ENCODE measurements at regions of chr1 and their contacts with region 1.

Region 1: GRCh38 chr1:212012034-212012740 is 23.2 kb downstream of the INTS7 start:
- DNase-seq: peak; percentile 72
- H3K4me3 Mint-ChIP-seq: no peak overlapping the region
- H3K27ac Mint-ChIP-seq: no peak overlapping the region
- H3K4me1 Mint-ChIP-seq: no peaks in the 10 kb centered on the region
- H3K27me3 Mint-ChIP-seq: no peaks in the 10 kb centered on the region

Region 2: DNA sequence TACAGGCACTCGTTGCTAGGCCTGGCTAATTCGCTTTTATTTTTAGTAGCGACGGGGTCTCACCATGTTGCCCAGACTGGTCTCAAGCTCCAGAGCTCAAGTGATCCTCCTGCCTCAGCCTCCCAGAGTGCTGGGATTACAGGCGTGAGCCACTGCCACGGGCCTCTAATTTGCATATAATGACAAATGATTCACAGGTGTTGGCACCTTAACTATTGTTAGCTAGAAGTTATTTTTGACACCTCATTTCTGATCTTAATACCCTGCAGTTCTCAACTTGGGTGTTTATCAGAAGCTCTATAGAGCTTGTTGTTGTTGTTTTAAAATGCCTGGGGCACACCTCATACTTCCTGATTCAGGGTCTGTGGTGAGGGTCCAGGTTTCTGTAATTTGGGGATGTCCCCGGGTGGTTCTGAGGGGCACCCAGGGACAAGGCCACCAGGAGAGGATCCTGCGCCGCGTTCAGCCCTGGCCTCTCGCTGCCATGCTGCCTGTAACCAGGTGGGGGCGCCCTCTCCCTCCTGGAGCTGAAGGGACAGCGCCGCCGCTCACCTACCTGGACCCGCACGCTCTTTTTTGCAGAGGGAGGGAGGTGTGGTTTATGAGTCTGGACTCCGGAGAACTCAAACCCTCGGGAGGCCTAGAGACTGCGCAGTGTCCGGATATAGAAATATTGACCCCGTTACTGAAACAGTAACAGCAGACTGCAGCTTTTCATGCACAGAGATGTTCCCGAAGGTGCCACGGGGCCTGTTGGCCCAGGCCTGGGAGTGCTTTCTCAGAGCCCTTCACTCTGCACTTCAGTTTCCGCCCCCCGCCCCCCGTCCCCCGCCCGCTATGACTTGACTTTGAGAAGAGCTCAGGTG is 313.8 kb before region 1 on chr1:
- CTCF ChIA-PET with region 1: interaction called, 10 read pairs
- POLR2A ChIA-PET with region 1: no interaction called
- DNase-seq: peak; percentile 85
- H3K4me3 Mint-ChIP-seq: peak overlapping the region; percentile 52
- H3K27ac Mint-ChIP-seq: no peak overlapping the region
- H3K4me1 Mint-ChIP-seq: peaks cover 46% of the 10 kb centered on the region
- H3K27me3 Mint-ChIP-seq: peaks cover 20% of the 10 kb centered on the region

Measured in activated CD4-positive, alpha-beta memory T cell treated with anti-CD3 and anti-CD28 coated beads, Interleukin-2, amount 10 ng/mL, durations not matched to agents 7 days and 5 days (primary cell).